Calu3 (cell line): ENCODE measurements at regions of chr20 and their contacts with region 1.

Region 1: DNA sequence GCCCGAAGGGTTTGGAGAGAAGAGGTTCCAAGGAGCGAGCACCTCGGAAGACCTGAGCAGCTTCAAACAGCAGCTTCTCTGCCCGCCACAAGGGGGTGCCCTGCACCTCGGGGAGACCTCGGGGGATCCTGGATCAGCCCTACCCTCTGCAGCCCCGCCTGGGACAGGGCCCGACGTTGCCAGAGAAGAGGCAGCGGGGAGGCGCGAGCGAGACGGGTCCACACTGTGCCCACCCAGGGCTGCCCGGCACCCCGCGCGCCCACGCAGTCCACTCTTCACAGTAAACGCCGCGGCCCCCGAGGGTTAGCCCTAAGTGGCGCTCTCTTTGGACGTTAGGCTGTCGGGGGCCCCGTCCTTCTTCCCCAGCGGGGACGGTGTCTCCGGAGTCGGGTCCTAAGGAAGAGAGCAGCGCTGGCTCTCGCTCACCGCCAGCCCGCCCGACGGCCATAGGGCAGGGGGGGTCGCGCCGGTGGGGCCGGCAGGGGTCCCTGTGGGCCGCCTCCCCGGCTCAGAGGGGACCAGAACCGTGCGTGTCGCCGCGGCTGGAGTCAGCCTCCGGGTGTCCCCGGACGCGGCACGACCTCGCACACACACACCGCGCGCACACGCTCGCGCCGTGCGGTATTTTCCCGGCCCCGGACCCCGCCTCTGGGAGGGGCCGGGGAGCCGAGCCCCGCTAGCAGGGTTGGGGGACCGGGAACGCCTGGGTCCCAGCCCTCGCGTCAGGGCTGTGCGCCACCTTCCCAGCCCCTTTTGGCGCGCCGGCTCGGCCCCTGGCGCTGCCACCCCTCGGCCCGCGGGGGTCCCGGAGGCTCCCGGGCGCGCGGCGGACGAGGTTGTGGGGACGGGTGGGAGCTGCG is 929 bp downstream of the CDH22 start:
- DNase-seq: peak; percentile 85
- H3K4me3 Mint-ChIP-seq: no peak overlapping the region
- H3K27ac Mint-ChIP-seq: no peak overlapping the region
- H3K4me1 Mint-ChIP-seq: no peaks in the 10 kb centered on the region
- H3K27me3 Mint-ChIP-seq: peaks cover 88% of the 10 kb centered on the region
- CTCF ChIP-seq: peak; percentile 97

Region 2: DNA sequence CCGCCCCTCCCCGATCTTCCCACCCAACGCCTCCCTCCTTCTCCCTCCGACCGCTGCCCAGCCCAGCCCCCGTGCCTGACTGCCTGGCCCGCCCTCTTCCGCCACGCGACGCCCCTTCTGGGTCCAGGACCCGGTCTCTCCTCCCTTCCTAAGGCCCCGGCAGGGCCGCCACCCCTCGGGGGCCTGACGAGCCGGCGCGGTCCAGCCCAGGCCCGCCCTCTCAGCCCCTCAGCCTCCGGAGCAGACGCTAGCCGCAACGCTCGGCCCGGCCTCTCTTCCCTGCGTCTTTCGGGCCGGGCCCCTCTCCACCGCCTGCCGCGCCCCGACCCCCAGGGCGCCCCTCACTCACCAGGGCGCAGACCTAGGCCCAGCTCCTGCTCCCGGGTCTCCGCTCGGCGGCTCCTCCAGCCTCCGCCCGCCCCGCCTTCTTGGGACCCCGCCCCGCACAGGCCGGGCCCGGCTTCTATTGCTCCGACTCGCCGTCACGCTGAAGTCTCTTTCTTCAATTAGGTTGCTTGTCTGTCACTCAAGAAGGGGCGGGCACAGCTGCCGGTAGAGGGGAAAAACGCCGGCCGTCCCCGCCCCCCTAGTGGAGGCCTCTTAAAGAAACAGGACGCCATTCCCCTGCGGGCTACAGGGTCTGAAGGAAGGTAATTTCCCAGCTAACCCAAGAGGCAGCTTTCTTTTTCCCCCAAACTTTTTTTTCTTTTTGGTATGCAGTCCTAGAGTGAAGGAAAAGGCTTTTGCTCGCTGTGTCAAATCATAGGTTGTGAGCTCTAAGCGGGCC is 99.0 kb after region 1 on chr20 and contains the start of gene ELMO2:
- CTCF ChIA-PET with region 1: interaction called, 10 read pairs
- intact Hi-C with region 1: no loop called
- DNase-seq: peak; percentile 99
- H3K4me3 Mint-ChIP-seq: peak within 1 kb of the TSS; percentile 89
- H3K27ac Mint-ChIP-seq: peak within 1 kb of the TSS; percentile 6
- H3K4me1 Mint-ChIP-seq: peaks cover 36% of the 10 kb centered on the region
- H3K27me3 Mint-ChIP-seq: peaks cover 27% of the 10 kb centered on the region
- CTCF ChIP-seq: peak; percentile 55
- total RNA-seq, gene ELMO2: 42.2 and 51.6 TPM in 2 replicates